ENCODE measurements at regions of chr14 and their contacts with region 1.

Region 1: GRCh38 chr14:68598621-68599447 is 194.0 kb downstream of the ZFP36L1 start:
- DNase-seq: peak; percentile 91 to 96 (median 95)
- H3K4me3 ChIP-seq: peak overlapping the region in 2 of 3 experiments; percentile 13 to 65
- H3K4me3 Mint-ChIP-seq: peak overlapping the region; percentile 62 to 82
- H3K27ac ChIP-seq: peak overlapping the region; percentile 90 to 99
- H3K27ac Mint-ChIP-seq: peak overlapping the region; percentile 98 to 100 (median 99)
- H3K4me1 ChIP-seq: peaks cover 64 to 80% of the 10 kb centered on the region in 2 donors
- H3K4me1 Mint-ChIP-seq: peaks cover 69% of the 10 kb centered on the region
- H3K27me3 ChIP-seq: no peaks in the 10 kb centered on the region
- H3K27me3 Mint-ChIP-seq: peaks cover 0 to 4% (median 0%) of the 10 kb centered on the region in 3 donors
- CTCF ChIP-seq: no peak

Region 2: GRCh38 chr14:68577827-68578541 is 20.9 kb before region 1 on chr14:
- intact Hi-C with region 1: loop called in 1 of 2 experiments (anchors 2 kb)
- DNase-seq: peak; percentile 94 to 99 (median 97)
- H3K4me3 ChIP-seq: peak overlapping the region in 1 of 3 experiments; percentile 2
- H3K4me3 Mint-ChIP-seq: peak overlapping the region; percentile 64 to 85
- H3K27ac ChIP-seq: peak overlapping the region; percentile 89 to 92
- H3K27ac Mint-ChIP-seq: peak overlapping the region; percentile 99 to 100 (median 100)
- H3K4me1 ChIP-seq: peaks cover 65 to 68% of the 10 kb centered on the region in 2 donors
- H3K4me1 Mint-ChIP-seq: peaks cover 68% of the 10 kb centered on the region
- H3K27me3 ChIP-seq: no peaks in the 10 kb centered on the region
- H3K27me3 Mint-ChIP-seq: peaks cover 0 to 2% (median 2%) of the 10 kb centered on the region in 3 donors
- CTCF ChIP-seq: no peak

Region 3: DNA sequence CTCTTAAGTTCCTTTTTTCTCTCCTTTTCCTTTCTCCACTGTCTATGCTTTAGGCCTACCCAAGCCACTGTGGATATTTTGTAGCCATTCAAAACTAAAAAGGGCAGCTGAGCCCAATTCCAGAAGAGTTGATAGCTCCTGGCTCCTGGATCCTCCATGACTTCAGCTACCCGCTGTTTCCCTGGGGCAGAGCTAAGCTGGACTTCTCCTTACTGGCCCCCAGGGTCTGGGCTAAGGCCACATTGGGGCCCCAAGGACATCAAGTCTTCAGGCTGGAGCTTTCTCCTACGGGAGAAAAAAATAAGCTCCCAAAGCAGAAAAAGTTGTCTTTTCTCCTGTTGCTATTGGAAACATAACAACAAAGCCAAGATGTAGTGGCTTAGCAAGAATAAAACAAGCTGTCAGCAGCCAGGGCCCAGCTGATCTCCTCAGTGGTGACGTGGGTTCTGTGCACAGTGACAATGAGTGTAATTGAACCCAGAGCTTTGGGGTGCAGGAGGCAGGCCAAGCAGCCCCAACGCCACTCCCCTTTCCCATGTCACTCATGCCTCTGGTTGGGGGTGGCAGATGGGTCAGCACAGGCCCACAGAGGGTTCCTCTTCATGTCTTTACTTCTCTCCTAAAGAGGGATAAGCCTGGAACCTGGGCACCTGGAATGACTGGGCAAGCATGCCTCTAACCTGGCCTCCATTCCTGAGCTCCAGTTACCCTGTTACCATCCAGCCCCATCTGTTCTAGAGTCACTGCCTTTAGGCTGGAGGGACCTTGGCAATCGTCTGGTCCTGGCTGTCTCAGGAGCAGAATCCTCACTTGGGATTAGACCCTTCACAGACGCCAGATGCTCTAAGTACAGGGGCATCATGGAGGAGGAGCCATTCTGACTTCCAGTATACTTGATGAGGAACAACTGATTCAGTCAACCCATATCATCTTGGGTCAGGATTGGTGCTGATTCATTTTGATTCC is 22.8 kb after region 1 on chr14:
- intact Hi-C with region 1: no loop called
- DNase-seq: no peak
- H3K4me3 ChIP-seq: no peak overlapping the region
- H3K4me3 Mint-ChIP-seq: no peak overlapping the region
- H3K27ac ChIP-seq: no peak overlapping the region
- H3K27ac Mint-ChIP-seq: peak overlapping the region in 3 of 7 donors; percentile 22 to 79 (median 38)
- H3K4me1 ChIP-seq: peaks cover 13 to 15% of the 10 kb centered on the region in 2 donors
- H3K4me1 Mint-ChIP-seq: peaks cover 16% of the 10 kb centered on the region
- H3K27me3 ChIP-seq: no peaks in the 10 kb centered on the region
- H3K27me3 Mint-ChIP-seq: peaks cover 3 to 4% (median 4%) of the 10 kb centered on the region in 3 donors
- CTCF ChIP-seq: no peak

Region 4: GRCh38 chr14:68655911-68656360 is 57.1 kb after region 1 on chr14:
- intact Hi-C with region 1: no loop called
- DNase-seq: no peak
- H3K4me3 ChIP-seq: no peak overlapping the region
- H3K4me3 Mint-ChIP-seq: no peak overlapping the region
- H3K27ac ChIP-seq: no peak overlapping the region
- H3K27ac Mint-ChIP-seq: peak overlapping the region in 2 of 7 donors; percentile 32 to 76
- H3K4me1 ChIP-seq: peaks cover 30 to 36% of the 10 kb centered on the region in 2 donors
- H3K4me1 Mint-ChIP-seq: peaks cover 39% of the 10 kb centered on the region
- H3K27me3 ChIP-seq: no peaks in the 10 kb centered on the region
- H3K27me3 Mint-ChIP-seq: peaks cover 7 to 12% (median 7%) of the 10 kb centered on the region in 3 donors
- CTCF ChIP-seq: no peak

Region 5: DNA sequence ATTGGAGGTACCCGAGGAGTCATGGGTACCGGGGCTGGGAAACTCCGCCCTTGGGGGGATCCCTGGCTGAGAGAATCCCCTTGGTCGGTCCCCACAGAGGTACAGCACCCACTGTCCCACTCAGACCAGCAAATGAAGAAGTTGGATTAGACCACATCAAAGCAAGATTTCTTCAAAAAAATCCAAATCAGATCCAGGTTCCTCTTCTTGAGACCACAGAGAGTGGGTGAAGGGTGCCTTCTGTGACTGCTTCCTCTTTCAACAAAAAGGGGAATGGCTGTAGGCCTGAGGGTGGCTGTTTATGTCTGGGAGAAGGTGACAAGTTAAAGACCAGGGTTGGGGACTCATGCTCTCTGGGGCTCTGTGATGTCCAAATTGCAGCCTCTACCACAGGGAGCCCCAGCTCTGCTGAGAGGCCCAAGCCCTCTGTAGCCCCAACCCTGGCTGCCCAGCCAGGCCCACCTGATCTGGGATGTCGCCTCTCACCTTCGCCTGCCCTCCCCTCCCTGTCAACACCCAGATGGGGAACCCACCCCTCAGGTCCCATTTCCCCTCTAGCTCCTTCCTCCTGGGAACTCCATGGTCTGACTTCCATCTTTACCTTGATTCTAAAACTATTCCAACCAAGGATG is 143.1 kb after region 1 on chr14:
- intact Hi-C with region 1: loop called in 1 of 2 experiments (anchors 5 kb)
- DNase-seq: peak; percentile 95 to 99 (median 98)
- H3K4me3 ChIP-seq: peak overlapping the region in 1 of 3 experiments; percentile 12
- H3K4me3 Mint-ChIP-seq: peak overlapping the region in 1 of 2 donors; percentile 65
- H3K27ac ChIP-seq: peak overlapping the region; percentile 37 to 74
- H3K27ac Mint-ChIP-seq: peak overlapping the region; percentile 81 to 95 (median 91)
- H3K4me1 ChIP-seq: peaks cover 29% of the 10 kb centered on the region in 2 donors
- H3K4me1 Mint-ChIP-seq: peaks cover 38% of the 10 kb centered on the region
- H3K27me3 ChIP-seq: peaks cover 66 to 79% of the 10 kb centered on the region in 2 donors
- H3K27me3 Mint-ChIP-seq: peaks cover 79 to 84% (median 82%) of the 10 kb centered on the region in 3 donors
- CTCF ChIP-seq: no peak

Region 6: GRCh38 chr14:68788996-68789820 is 190.4 kb after region 1 on chr14:
- intact Hi-C with region 1: loop called in 1 of 2 experiments (anchors 2 kb)
- DNase-seq: peak; percentile 74 to 84 (median 84)
- H3K4me3 ChIP-seq: peak overlapping the region; percentile 54 to 97 (median 77)
- H3K4me3 Mint-ChIP-seq: peak overlapping the region; percentile 95 to 100
- H3K27ac ChIP-seq: peak overlapping the region; percentile 61 to 97
- H3K27ac Mint-ChIP-seq: peak overlapping the region; percentile 75 to 100 (median 90)
- H3K4me1 ChIP-seq: peaks cover 26 to 58% of the 10 kb centered on the region in 2 donors
- H3K4me1 Mint-ChIP-seq: peaks cover 53% of the 10 kb centered on the region
- H3K27me3 ChIP-seq: no peaks in the 10 kb centered on the region
- H3K27me3 Mint-ChIP-seq: peaks cover 4 to 13% (median 12%) of the 10 kb centered on the region in 3 donors
- CTCF ChIP-seq: peak; percentile 79

Measured in CD14-positive monocyte (primary cell).